ENCODE measurements at regions of chrX and their contacts with region 1.

Region 1: DNA sequence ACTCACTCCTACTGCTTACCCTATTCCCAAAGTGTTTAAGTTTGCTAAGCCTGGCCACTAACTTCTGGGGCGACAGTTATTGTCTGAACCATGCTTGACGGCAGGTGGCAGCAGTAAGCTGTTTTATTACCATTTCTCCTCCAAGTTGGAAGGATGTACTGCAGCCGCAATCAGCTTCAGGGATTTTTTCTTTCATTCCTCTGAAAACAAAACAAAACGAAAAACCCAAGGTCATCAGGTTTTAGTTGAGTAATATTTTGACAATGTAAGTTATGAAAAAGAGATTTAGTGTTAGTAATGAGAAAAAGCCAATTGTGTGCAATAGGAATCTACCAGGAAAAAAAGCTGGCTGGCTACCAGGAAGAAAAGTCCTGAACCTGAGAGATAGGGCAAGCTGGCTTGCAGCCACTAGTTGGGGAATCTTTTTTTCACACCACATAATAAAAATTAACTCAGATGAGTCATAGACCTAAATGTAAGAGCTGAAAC is 13.2 kb upstream of the RAB9B start:
- DNase-seq: peak in 26 of 35 experiments; percentile 0 to 63 (median 20)
- ATAC-seq: peak in 3 of 4 experiments; percentile 56 to 66 (median 57)
- H3K4me3 ChIP-seq: no peak overlapping the region
- H3K4me3 Mint-ChIP-seq: no peak overlapping the region
- H3K27ac ChIP-seq: no peak overlapping the region
- H3K27ac Mint-ChIP-seq: no peak overlapping the region
- H3K4me1 ChIP-seq: no peaks in the 10 kb centered on the region
- H3K4me1 Mint-ChIP-seq: no peaks in the 10 kb centered on the region
- H3K27me3 ChIP-seq: no peaks in the 10 kb centered on the region
- H3K27me3 Mint-ChIP-seq: peaks cover 0 to 28% of the 10 kb centered on the region in 2 donors

Region 2: GRCh38 chrX:103585411-103586313 is 259.5 kb before region 1 on chrX and contains the start of gene TCEAL4:
- CTCF ChIA-PET with region 1: no interaction called
- POLR2A ChIA-PET with region 1: no interaction called
- DNase-seq: peak in 16 of 35 experiments; percentile 2 to 42 (median 20)
- ATAC-seq: peak; percentile 52 to 91 (median 82)
- H3K4me3 ChIP-seq: peak within 1 kb of the TSS; percentile 53 to 70
- H3K4me3 Mint-ChIP-seq: peak within 1 kb of the TSS; percentile 83 to 85 (median 85)
- H3K27ac ChIP-seq: no peak within 1 kb of the TSS
- H3K27ac Mint-ChIP-seq: peak within 1 kb of the TSS in 1 of 2 donors; percentile 78
- H3K4me1 ChIP-seq: peaks cover 0 to 8% of the 10 kb centered on the region in 2 experiments
- H3K4me1 Mint-ChIP-seq: peaks cover 13 to 15% (median 14%) of the 10 kb centered on the region in 3 donors
- H3K27me3 ChIP-seq: no peaks in the 10 kb centered on the region
- H3K27me3 Mint-ChIP-seq: peaks cover 4 to 23% of the 10 kb centered on the region in 2 donors
- total RNA-seq, gene TCEAL4: 9.4 to 12.4 (median 9.4) TPM

Region 3: GRCh38 chrX:103663981-103664762 is 181.0 kb before region 1 on chrX:
- CTCF ChIA-PET with region 1: no interaction called
- POLR2A ChIA-PET with region 1: no interaction called
- DNase-seq: no peak
- ATAC-seq: no peak
- H3K4me3 ChIP-seq: no peak overlapping the region
- H3K4me3 Mint-ChIP-seq: no peak overlapping the region
- H3K27ac ChIP-seq: no peak overlapping the region
- H3K27ac Mint-ChIP-seq: no peak overlapping the region
- H3K4me1 ChIP-seq: no peaks in the 10 kb centered on the region
- H3K4me1 Mint-ChIP-seq: peaks cover 0 to 8% (median 3%) of the 10 kb centered on the region in 3 donors
- H3K27me3 ChIP-seq: peaks cover 0 to 7% of the 10 kb centered on the region in 2 experiments
- H3K27me3 Mint-ChIP-seq: peaks cover 18 to 31% of the 10 kb centered on the region in 2 donors

Region 4: GRCh38 chrX:103941201-103941975 is 96.2 kb after region 1 on chrX:
- CTCF ChIA-PET with region 1: interaction called, 9 to 11 read pairs
- POLR2A ChIA-PET with region 1: no interaction called
- DNase-seq: peak in 3 of 35 experiments; percentile 0 to 58 (median 3)
- ATAC-seq: no peak
- H3K4me3 ChIP-seq: no peak overlapping the region
- H3K4me3 Mint-ChIP-seq: no peak overlapping the region
- H3K27ac ChIP-seq: no peak overlapping the region
- H3K27ac Mint-ChIP-seq: no peak overlapping the region
- H3K4me1 ChIP-seq: peaks cover 2 to 11% of the 10 kb centered on the region in 2 experiments
- H3K4me1 Mint-ChIP-seq: peaks cover 10 to 27% (median 12%) of the 10 kb centered on the region in 3 donors
- H3K27me3 ChIP-seq: no peaks in the 10 kb centered on the region
- H3K27me3 Mint-ChIP-seq: peaks cover 0 to 8% of the 10 kb centered on the region in 2 donors